Motor neuron (in vitro differentiated cells): ENCODE measurements at regions of chrX and their contacts with region 1.

Region 1: DNA sequence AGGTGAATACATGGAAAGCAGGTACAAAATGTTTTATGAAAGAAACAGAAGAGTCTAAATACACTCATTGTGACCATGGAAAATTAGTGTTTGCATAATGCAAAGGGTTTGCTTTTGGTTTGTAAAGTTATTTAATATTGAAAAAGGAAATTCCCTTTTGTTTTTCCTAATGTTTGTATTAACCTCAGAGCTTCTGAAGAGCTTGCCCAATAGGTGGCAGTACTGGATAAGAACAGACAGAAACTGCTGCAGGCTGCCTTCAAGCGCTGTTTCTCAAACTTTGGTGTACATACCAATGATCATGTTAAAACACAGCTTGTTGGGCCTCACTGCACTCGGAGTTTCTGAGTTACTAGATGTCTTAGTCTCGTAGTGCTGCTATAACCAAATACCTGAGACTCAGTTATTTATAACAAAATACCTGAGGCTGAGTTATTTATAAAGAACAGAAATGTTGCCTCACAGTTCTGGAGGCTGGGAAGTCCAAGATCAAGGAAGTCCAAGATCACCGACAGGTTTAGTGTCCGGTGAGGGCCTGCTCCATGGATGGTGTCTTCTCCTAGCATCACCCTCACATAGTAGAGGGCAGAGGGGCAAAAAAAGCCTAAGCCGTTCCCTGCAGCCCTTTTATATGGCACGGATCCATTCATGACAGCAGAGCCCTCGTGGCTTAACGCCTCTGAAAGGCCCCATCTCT is 54.2 kb downstream of the SUPT20HL2 start:
- ATAC-seq: peak in 3 of 8 experiments; percentile 59 to 73 (median 68)
- H3K4me3 ChIP-seq: no peak overlapping the region
- H3K27ac ChIP-seq: no peak overlapping the region
- H3K4me1 ChIP-seq: no peaks in the 10 kb centered on the region

Region 2: GRCh38 chrX:24090300-24091200 is 169.1 kb before region 1 on chrX:
- in situ Hi-C with region 1: no loop called
- ATAC-seq: no peak
- H3K4me3 ChIP-seq: no peak overlapping the region
- H3K27ac ChIP-seq: no peak overlapping the region
- H3K4me1 ChIP-seq: no peaks in the 10 kb centered on the region

Region 3: DNA sequence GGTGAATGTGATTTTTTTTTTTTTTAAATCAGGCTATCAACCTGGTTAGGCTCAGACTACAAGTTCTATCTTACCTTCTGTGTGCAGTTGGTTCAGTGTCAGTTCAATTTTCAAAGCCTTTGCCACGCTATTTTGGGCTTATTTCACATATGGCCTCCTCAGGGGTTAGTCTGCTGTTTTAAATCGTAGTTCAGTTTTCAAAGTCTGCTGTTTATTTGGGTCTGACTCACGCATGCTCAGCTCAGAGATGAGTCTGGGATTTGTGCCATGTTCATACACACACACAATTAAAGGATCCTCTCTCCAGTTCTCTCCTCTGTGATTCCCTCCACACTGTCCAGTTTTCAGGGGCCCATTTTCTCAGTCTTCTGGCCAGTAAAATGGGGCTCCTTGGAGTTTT is 142.4 kb before region 1 on chrX:
- in situ Hi-C with region 1: no loop called
- ATAC-seq: peak in 3 of 8 experiments; percentile 56 to 74 (median 66)
- H3K4me3 ChIP-seq: no peak overlapping the region
- H3K27ac ChIP-seq: no peak overlapping the region
- H3K4me1 ChIP-seq: no peaks in the 10 kb centered on the region

Region 4: DNA sequence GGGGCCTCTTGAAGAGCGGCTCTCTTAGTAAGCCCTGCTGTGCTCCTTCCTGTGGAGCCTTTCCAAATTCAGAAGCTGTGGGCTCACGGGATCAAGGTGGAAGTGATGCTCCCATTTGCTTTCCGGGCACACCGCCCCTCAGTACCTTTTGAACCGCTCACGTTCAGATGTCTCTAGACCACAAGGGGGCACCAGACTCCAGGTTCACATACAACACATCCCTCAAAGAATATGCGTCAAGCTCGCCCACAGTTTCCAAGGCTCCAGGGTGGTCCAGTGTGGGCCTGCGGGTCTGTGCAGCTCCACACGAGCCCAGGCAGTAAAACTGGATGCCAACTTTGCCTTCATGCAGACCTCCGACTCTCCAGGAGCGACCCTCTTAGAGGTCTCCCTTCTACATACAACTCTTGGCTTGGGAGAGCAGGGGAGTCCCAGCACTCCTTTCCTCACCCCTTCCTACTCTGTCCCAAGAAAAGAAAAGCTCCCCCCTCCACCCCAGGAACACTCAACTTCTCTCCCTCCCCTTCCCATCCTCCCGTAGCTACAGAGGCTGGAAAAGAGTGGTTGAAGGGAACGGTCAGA is 111.8 kb after region 1 on chrX:
- in situ Hi-C with region 1: loop called in 1 of 9 experiments (anchors 25 kb)
- ATAC-seq: peak in 6 of 8 experiments; percentile 48 to 88 (median 59)
- H3K4me3 ChIP-seq: no peak overlapping the region
- H3K27ac ChIP-seq: no peak overlapping the region
- H3K4me1 ChIP-seq: no peaks in the 10 kb centered on the region

Region 5: GRCh38 chrX:24448762-24449250 is 189.1 kb after region 1 on chrX:
- in situ Hi-C with region 1: no loop called
- ATAC-seq: peak in 3 of 8 experiments; percentile 24 to 45 (median 31)
- H3K4me3 ChIP-seq: no peak overlapping the region
- H3K27ac ChIP-seq: no peak overlapping the region
- H3K4me1 ChIP-seq: no peaks in the 10 kb centered on the region